ENCODE measurements at regions of chr1 and their contacts with region 1.

Region 1: DNA sequence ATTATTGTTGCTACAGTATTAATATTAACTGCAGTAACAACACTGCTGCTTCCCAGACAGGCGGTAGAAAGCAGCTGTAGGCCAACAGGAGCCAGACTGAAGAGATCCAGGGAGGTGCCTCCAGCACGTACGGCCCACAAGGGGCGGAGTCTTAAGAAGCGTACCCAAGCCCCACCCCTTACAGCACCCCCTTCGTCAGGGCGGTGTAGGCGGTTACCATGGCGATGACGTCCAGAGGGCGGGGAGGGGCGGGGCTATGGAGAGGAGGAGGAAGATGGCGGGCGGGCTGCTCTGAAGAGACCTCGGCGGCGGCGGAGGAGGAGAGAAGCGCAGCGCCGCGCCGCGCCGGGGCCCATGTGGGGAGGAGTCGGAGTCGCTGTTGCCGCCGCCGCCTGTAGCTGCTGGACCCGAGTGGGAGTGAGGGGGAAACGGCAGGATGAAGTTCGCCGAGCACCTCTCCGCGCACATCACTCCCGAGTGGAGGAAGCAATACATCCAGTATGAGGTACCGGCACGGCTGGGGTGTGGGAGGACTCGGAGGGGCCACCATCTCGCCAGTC is at the start of gene XPR1:
- DNase-seq: peak; percentile 100
- H3K4me3 Mint-ChIP-seq: no peak within 1 kb of the TSS
- H3K27ac Mint-ChIP-seq: no peak within 1 kb of the TSS
- H3K4me1 Mint-ChIP-seq: peaks cover 11% of the 10 kb centered on the region
- H3K27me3 Mint-ChIP-seq: no peaks in the 10 kb centered on the region
- CTCF ChIP-seq: no peak
- total RNA-seq, gene XPR1: 38.6 and 39.7 TPM in 2 replicates

Region 2: DNA sequence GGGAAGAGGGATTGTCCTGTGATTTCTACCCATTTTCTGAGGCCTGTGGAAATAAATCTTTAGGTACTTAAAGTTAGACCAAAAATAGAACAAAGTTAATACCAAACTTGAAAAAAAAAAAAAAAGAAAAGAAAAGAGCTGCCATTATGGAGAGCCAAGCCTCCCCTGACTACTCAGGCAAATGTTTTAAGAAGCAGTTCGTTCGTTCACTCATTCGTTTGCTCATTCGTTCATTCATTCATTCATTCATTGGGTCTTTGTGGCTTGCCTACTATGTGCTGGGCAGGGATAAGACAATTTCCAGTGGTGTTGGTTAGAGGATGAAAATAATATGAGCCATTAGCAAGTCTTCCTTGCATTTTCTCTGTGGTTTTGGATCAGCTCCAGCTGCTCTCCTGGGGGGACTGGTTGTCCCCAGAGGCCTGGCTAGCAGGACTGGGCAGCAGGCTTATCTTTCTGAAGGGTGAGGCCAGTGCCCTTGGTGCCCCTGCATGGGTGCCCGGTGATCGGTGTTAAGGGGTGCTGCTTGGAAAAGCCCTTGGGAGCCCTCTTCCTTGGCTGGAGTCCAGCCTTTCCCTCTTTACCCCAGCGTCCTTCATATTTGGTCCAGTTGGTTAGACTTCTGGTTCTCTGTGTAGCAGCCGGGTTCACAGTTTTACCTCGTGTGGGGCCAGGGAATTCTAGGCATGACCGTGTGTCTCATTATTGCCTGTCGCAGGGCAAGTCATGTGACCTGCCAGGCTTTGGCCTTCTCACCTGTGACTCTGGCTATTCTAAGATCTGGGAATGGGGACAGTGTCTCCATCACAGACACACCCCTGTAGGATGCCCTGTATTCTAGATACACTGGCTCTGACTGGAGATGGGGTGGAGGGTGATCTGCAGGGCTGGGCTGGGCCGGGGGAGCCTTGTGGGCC is 369.0 kb before region 1 on chr1:
- CTCF ChIA-PET with region 1: no interaction called
- POLR2A ChIA-PET with region 1: no interaction called
- intact Hi-C with region 1: no loop called
- DNase-seq: no peak
- H3K4me3 Mint-ChIP-seq: no peak overlapping the region
- H3K27ac Mint-ChIP-seq: no peak overlapping the region
- H3K4me1 Mint-ChIP-seq: no peaks in the 10 kb centered on the region
- H3K27me3 Mint-ChIP-seq: peaks cover 38% of the 10 kb centered on the region
- CTCF ChIP-seq: no peak

Region 3: DNA sequence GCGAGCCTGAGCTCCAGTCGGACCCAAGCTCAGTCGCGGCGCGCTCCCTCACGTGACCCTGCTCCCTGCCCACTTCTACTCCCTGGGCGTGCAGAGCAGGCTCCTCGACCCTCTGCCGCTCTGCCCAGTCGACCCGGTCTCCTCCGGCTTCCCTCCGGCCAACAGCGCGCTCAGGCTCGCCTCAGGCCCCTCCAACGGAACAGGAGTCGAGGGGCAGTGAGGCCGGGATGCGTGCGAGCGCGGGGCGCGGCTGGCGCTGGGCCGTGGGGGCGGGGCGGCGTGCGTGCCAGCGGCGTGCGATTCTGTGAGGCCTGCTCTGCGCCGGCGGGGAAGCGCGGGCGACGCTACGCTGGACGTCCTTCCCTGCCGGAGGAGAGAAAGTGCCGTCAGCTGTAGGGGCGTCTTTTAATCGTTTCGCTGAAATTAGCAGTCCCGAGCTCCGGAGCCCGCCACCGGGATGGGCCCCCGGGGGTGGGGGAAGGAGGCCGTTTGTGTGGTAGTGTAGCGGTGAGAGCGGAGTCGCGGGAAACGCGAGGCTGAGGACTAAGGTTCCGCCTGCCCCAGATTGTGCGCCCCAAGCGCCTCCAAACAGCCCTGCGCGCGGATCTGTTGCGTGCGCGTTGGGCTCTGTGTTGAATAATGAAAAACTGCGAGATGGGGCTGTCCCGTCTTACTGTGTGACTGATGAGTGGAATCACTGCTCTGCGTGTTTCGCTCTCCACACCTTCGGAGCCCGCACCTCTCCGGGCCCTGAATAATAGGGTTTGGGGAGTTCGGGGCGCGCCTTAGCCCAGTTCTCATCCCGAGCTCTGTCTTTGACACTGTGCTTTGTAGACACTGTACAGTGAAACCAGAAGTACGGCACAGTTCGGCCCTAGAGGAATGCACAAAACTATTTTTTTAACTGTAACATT is 129.2 kb before region 1 on chr1 and contains the start of gene ACBD6:
- CTCF ChIA-PET with region 1: interaction called, 4 read pairs
- POLR2A ChIA-PET with region 1: interaction called, 34 read pairs
- intact Hi-C with region 1: no loop called
- DNase-seq: peak; percentile 94
- H3K4me3 Mint-ChIP-seq: peak within 1 kb of the TSS; percentile 94
- H3K27ac Mint-ChIP-seq: peak within 1 kb of the TSS; percentile 97
- H3K4me1 Mint-ChIP-seq: peaks cover 29% of the 10 kb centered on the region
- H3K27me3 Mint-ChIP-seq: no peaks in the 10 kb centered on the region
- CTCF ChIP-seq: no peak
- total RNA-seq, gene ACBD6: 123 and 136 TPM in 2 replicates

Region 4: GRCh38 chr1:180521474-180522207 is 110.2 kb before region 1 on chr1:
- CTCF ChIA-PET with region 1: interaction called, 44 read pairs
- POLR2A ChIA-PET with region 1: interaction called, 51 read pairs
- intact Hi-C with region 1: loop called (anchors 1 kb)
- DNase-seq: peak; percentile 96
- H3K4me3 Mint-ChIP-seq: peak overlapping the region; percentile 34
- H3K27ac Mint-ChIP-seq: peak overlapping the region; percentile 82
- H3K4me1 Mint-ChIP-seq: peaks cover 61% of the 10 kb centered on the region
- H3K27me3 Mint-ChIP-seq: no peaks in the 10 kb centered on the region
- CTCF ChIP-seq: no peak

Region 5: DNA sequence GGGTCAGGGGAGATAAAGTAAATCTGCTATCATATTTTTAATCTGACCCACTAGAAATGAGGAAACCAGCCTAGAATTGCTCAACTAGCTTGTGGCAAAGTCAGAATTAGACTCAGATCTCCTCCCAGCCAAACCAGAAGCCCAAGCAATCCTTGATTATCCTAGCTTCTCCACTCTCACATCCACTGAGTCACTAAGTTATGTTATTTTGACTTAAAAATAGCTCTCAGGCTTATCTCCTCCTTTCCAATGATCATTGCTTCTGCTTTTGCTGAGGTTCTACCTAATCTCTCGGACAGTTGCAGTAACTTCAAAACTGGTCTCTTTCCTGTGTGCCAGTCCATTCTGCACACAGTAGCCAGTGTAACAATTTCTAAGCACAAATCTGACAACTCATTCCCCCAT is 50.2 kb before region 1 on chr1:
- CTCF ChIA-PET with region 1: interaction called, 12 read pairs
- POLR2A ChIA-PET with region 1: interaction called, 33 read pairs
- intact Hi-C with region 1: no loop called
- DNase-seq: no peak
- H3K4me3 Mint-ChIP-seq: no peak overlapping the region
- H3K27ac Mint-ChIP-seq: no peak overlapping the region
- H3K4me1 Mint-ChIP-seq: peaks cover 52% of the 10 kb centered on the region
- H3K27me3 Mint-ChIP-seq: no peaks in the 10 kb centered on the region
- CTCF ChIP-seq: no peak

Region 6: GRCh38 chr1:180611016-180611930 is 20.6 kb before region 1 on chr1:
- CTCF ChIA-PET with region 1: interaction called, 10 read pairs
- POLR2A ChIA-PET with region 1: interaction called, 9 read pairs
- intact Hi-C with region 1: no loop called
- DNase-seq: no peak
- H3K4me3 Mint-ChIP-seq: no peak overlapping the region
- H3K27ac Mint-ChIP-seq: no peak overlapping the region
- H3K4me1 Mint-ChIP-seq: no peaks in the 10 kb centered on the region
- H3K27me3 Mint-ChIP-seq: no peaks in the 10 kb centered on the region
- CTCF ChIP-seq: no peak

Region 7: GRCh38 chr1:180778782-180779398 is 147.0 kb after region 1 on chr1:
- CTCF ChIA-PET with region 1: interaction called, 3 read pairs
- POLR2A ChIA-PET with region 1: no interaction called
- intact Hi-C with region 1: loop called (anchors 2 kb)
- DNase-seq: peak; percentile 59
- H3K4me3 Mint-ChIP-seq: no peak overlapping the region
- H3K27ac Mint-ChIP-seq: no peak overlapping the region
- H3K4me1 Mint-ChIP-seq: peaks cover 9% of the 10 kb centered on the region
- H3K27me3 Mint-ChIP-seq: no peaks in the 10 kb centered on the region
- CTCF ChIP-seq: peak; percentile 57

Region 8: DNA sequence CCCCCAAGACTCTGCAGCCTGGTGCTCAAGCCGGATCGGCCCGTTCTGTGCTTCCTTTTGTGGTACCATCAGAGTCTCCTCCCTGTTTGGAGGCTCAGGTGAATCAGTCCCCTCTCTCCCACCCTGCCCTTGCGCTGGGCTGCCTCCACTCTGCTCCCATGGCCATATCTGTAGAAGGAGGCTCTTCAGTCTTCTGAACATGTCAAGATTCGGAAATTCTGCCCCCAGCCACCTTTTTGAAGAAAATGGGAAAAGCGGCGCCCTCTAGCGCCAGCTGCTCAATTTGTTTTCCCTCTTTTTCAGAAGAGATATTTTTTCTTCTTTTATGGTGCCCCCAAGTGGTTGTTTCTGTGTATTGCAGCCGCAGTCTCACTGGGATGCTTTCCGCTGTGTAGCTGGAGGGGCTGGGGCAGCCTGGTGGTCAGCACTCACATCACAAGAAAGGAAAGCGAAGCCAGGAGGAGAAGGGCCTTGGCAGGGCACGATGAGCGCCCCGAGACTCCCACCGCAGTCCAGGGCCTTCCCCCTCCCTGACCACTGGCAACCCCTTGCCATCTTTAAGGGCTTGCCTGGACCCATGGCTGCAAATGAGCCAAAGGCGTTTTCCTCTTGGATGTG is 793.0 kb after region 1 on chr1:
- CTCF ChIA-PET with region 1: no interaction called
- POLR2A ChIA-PET with region 1: no interaction called
- intact Hi-C with region 1: loop called (anchors 10 kb)
- DNase-seq: peak; percentile 84
- H3K4me3 Mint-ChIP-seq: peak overlapping the region; percentile 56
- H3K27ac Mint-ChIP-seq: no peak overlapping the region
- H3K4me1 Mint-ChIP-seq: peaks cover 8% of the 10 kb centered on the region
- H3K27me3 Mint-ChIP-seq: peaks cover 38% of the 10 kb centered on the region
- CTCF ChIP-seq: peak; percentile 100

Measured in MCF 10A (cell line).